ENCODE measurements at regions of chr1 and their contacts with region 1.

Region 1: DNA sequence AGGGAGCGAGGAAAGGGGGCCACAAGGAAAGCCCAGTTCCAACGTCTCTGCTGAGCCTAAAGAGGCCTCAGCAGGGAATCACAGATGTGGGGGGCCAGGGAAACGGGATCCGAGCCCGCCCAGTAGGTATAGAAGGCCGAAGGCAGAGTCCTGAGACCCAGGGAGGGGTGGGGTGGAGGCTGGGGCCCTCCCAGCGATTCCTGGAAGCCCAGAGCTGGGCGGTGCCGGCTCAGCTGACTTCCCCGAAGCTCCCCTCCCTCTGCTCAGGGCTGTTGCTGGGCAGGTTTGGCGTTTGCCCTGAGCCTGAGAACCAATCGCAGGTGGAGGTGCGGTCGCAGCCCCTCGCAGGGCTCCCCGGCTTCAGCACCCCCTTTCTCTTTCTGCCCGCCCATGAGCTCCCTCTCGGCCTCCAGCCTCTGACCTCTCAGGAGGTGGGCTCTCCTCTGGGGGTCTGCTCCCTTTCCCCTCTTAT is 12.8 kb downstream of the ADAMTSL4 start:
- DNase-seq: peak; percentile 86
- H3K4me3 ChIP-seq: peak overlapping the region; percentile 42 to 57 (median 42)
- H3K27ac ChIP-seq: peak overlapping the region; percentile 99
- H3K4me1 ChIP-seq: peaks cover 69% of the 10 kb centered on the region
- H3K27me3 ChIP-seq: no peaks in the 10 kb centered on the region
- CTCF ChIP-seq: no peak

Region 2: DNA sequence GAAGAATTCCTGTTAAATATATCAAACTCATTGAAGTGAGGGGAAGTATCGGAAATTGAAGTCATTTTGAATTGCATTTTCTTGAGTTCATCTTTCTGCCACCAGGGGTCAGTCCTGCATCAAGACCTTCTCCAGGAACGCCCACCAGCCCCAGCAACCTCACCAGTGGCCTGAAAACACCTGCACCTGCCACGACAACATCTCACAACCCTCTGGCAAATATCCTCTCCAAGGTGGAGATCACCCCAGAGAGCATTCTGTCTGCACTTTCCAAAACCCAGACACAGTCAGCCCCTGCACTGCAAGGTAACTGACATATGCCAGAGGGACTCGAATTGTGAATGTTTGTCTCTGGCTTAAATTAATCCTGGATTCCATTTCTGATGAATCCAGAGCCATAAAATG is 97.6 kb before region 1 on chr1:
- CTCF ChIA-PET with region 1: no interaction called
- dilution Hi-C with region 1: no loop called
- in situ Hi-C with region 1: no loop called
- intact Hi-C with region 1: loop called (anchors 1 kb)
- DNase-seq: peak; percentile 42
- H3K4me3 ChIP-seq: no peak overlapping the region
- H3K27ac ChIP-seq: no peak overlapping the region
- H3K4me1 ChIP-seq: peaks cover 10% of the 10 kb centered on the region
- H3K27me3 ChIP-seq: no peaks in the 10 kb centered on the region
- CTCF ChIP-seq: peak; percentile 76 to 77

Region 3: DNA sequence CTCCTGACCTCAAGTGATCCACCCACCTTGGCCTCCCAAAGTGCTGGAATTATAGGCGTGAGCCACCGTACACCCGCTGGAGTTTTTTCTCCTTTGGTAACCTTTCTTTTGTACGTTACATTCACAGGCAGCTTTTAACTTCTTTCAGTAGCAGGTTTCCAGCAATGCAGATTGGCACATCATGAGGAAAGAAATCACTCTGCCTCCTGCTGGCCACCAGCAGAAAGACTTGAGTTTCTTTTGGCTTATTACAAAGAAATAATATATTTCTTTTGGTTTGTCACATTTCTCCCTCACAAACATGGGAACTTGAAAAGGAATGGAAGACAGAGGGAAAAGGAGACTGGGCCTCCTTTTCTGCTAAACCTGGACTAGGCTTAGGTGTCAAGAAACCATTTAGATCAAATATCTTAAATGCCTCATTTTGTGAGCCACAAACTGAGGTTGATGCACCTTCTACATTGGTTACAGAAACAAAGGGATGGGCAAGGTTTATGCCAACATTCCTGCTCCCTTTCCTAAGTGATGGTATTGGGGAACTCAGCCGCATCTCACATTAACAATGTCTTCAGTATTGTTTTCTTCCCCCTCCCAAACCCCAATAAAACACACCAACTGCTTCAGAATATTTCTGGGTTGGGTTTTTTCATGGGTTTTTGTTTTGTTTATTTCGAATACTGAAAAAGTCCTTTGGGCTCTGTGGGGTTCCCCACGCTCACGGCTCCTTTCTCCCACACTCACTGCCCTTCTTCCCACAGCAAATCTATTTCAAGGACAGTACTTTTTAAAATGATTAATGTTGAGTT is 59.7 kb after region 1 on chr1:
- CTCF ChIA-PET with region 1: no interaction called
- dilution Hi-C with region 1: no loop called
- in situ Hi-C with region 1: loop called in 1 of 2 experiments (anchors 5 kb)
- intact Hi-C with region 1: loop called (anchors 1 kb)
- DNase-seq: no peak
- H3K4me3 ChIP-seq: no peak overlapping the region
- H3K27ac ChIP-seq: peak overlapping the region; percentile 30
- H3K4me1 ChIP-seq: peaks cover 62% of the 10 kb centered on the region
- H3K27me3 ChIP-seq: no peaks in the 10 kb centered on the region
- CTCF ChIP-seq: peak; percentile 60 to 65

Region 4: GRCh38 chr1:150808121-150808520 is 246.1 kb after region 1 on chr1 and contains the start of gene CTSK:
- CTCF ChIA-PET with region 1: no interaction called
- dilution Hi-C with region 1: no loop called
- in situ Hi-C with region 1: loop called (anchors 5 to 10 kb)
- intact Hi-C with region 1: loop called (anchors 1 kb)
- DNase-seq: no peak
- H3K4me3 ChIP-seq: no peak within 1 kb of the TSS
- H3K27ac ChIP-seq: no peak within 1 kb of the TSS
- H3K4me1 ChIP-seq: peaks cover 14% of the 10 kb centered on the region
- H3K27me3 ChIP-seq: no peaks in the 10 kb centered on the region
- CTCF ChIP-seq: no peak
- total RNA-seq, gene CTSK: 4.6 to 6.7 TPM

Region 5: GRCh38 chr1:150925816-150926741 is 364.1 kb after region 1 on chr1 and contains the start of gene SETDB1:
- CTCF ChIA-PET with region 1: no interaction called
- dilution Hi-C with region 1: no loop called
- in situ Hi-C with region 1: no loop called
- intact Hi-C with region 1: loop called (anchors 1 kb)
- DNase-seq: peak; percentile 92
- H3K4me3 ChIP-seq: peak within 1 kb of the TSS; percentile 70 to 100 (median 88)
- H3K27ac ChIP-seq: peak within 1 kb of the TSS; percentile 75
- H3K4me1 ChIP-seq: peaks cover 11% of the 10 kb centered on the region
- H3K27me3 ChIP-seq: no peaks in the 10 kb centered on the region
- CTCF ChIP-seq: peak in 1 of 2 donors; percentile 23
- total RNA-seq, gene SETDB1: 30.3 TPM

Measured in mammary epithelial cell (primary cell).